ENCODE measurements at regions of chr11 and their contacts with region 1.

Region 1: DNA sequence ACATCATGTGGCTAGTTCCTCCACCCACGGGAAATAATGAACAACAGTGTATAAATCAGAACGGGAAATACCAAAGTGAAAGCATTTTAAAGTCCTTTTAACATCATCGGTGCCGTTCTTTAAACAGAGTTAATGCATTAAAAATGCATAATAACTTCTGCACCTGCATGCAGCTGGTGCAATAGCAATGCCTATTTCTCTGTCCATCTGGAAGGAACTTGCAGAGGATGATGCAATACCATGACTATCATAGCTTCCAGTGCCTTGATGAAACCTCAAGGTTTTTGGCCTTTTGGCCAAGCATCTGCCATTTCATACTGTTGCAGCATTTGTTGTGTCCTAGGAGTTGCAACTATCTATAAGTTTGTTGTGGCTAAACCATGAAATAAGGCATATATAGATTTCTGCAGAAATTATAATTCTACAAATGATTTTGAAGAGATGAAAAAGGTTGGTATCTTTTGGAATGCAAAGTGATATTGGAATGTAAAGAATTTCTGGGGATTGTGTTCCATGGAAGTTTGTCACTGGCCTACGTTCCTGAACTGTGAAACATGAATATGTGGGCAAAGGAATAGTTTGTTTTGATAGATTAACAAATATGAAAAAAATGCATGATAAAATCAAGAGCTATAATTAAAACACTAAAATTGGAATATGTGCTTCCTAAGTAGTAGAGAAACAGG is 9.8 kb upstream of the EIF3F start:
- DNase-seq: peak; percentile 94
- H3K4me3 ChIP-seq: no peak overlapping the region
- H3K27me3 ChIP-seq: no peaks in the 10 kb centered on the region
- CTCF ChIP-seq: no peak

Region 2: GRCh38 chr11:7965386-7965785 is 12.0 kb before region 1 on chr11 and contains the start of gene NLRP10:
- CTCF ChIA-PET with region 1: no interaction called
- POLR2A ChIA-PET with region 1: interaction called, 11 read pairs
- DNase-seq: peak; percentile 86
- H3K4me3 ChIP-seq: no peak within 1 kb of the TSS
- H3K27me3 ChIP-seq: no peaks in the 10 kb centered on the region
- CTCF ChIP-seq: no peak
- polyA plus RNA-seq, gene NLRP10: 3.9 and 5.1 TPM in 2 replicates